Activated CD4-positive, alpha-beta T cell treated with anti-CD3 and anti-CD28 coated beads, Interleukin-2, amount 10 ng/mL, durations not matched to agents 24 days and 14 days (primary cell): ENCODE measurements at regions of chr12 and their contacts with region 1.

Region 1: GRCh38 chr12:66860752-66861750 is 182.2 kb upstream of the GRIP1 start:
- DNase-seq: peak; percentile 89
- H3K4me3 Mint-ChIP-seq: no peak overlapping the region
- H3K27ac Mint-ChIP-seq: no peak overlapping the region
- H3K4me1 Mint-ChIP-seq: no peaks in the 10 kb centered on the region
- H3K27me3 Mint-ChIP-seq: peaks cover 15% of the 10 kb centered on the region

Region 2: GRCh38 chr12:66269757-66270383 is 591.2 kb before region 1 on chr12:
- intact Hi-C with region 1: loop called (anchors 5 kb)
- DNase-seq: peak; percentile 74
- H3K4me3 Mint-ChIP-seq: no peak overlapping the region
- H3K27ac Mint-ChIP-seq: no peak overlapping the region
- H3K4me1 Mint-ChIP-seq: peaks cover 6% of the 10 kb centered on the region
- H3K27me3 Mint-ChIP-seq: no peaks in the 10 kb centered on the region

Region 3: GRCh38 chr12:66688846-66689439 is 172.1 kb before region 1 on chr12:
- intact Hi-C with region 1: loop called (anchors 2 kb)
- DNase-seq: peak; percentile 75
- H3K4me3 Mint-ChIP-seq: no peak overlapping the region
- H3K27ac Mint-ChIP-seq: no peak overlapping the region
- H3K4me1 Mint-ChIP-seq: no peaks in the 10 kb centered on the region
- H3K27me3 Mint-ChIP-seq: peaks cover 18% of the 10 kb centered on the region

Region 4: GRCh38 chr12:66708704-66709456 is 152.2 kb before region 1 on chr12:
- intact Hi-C with region 1: loop called (anchors 5 kb)
- DNase-seq: no peak
- H3K4me3 Mint-ChIP-seq: no peak overlapping the region
- H3K27ac Mint-ChIP-seq: no peak overlapping the region
- H3K4me1 Mint-ChIP-seq: peaks cover 9% of the 10 kb centered on the region
- H3K27me3 Mint-ChIP-seq: peaks cover 18% of the 10 kb centered on the region

Region 5: DNA sequence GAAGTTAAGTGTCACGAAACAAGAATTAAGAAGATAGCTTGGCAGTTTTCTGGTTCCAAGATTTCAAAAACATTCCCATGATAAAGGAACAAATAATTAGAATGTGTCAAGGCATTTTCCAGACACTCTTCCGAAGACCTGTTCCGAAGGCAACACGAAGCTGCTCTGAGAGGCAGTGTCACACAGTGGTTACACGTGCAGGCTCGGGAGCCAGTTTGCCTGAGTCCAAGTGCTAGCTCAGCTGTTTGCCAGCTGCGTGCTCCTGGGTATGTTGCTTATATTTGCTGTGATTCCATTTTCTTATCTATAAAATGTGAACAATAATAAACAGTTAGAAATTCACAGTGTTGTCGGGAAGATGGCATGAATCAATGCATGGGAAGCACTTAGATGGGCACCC is 35.7 kb after region 1 on chr12:
- intact Hi-C with region 1: no loop called
- DNase-seq: no peak
- H3K4me3 Mint-ChIP-seq: no peak overlapping the region
- H3K27ac Mint-ChIP-seq: no peak overlapping the region
- H3K4me1 Mint-ChIP-seq: peaks cover 7% of the 10 kb centered on the region
- H3K27me3 Mint-ChIP-seq: no peaks in the 10 kb centered on the region

Region 6: DNA sequence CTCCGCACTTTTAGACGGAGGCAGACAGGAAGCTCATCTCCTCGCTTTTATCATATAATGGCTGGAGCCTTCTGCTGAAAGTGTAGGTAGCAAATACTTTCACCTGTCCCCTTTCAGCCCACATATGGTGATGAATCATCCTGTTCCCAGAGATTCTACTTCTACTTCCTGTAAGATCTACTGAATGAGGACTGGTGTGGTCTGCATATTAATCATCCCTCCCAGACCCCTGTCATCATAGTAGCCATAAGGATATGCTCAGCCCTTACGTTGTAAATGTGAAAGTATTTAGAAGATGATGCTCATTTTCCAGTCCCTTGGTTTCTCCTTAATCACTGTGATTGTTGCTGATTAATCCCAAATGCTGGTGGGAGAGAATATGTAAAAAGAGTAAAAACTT is 86.1 kb after region 1 on chr12:
- intact Hi-C with region 1: no loop called
- DNase-seq: no peak
- H3K4me3 Mint-ChIP-seq: no peak overlapping the region
- H3K27ac Mint-ChIP-seq: no peak overlapping the region
- H3K4me1 Mint-ChIP-seq: peaks cover 2% of the 10 kb centered on the region
- H3K27me3 Mint-ChIP-seq: peaks cover 10% of the 10 kb centered on the region